ENCODE measurements at regions of chr2 and their contacts with region 1.

Region 1: GRCh38 chr2:60550178-60550983 is 3.1 kb downstream of the BCL11A start:
- DNase-seq: peak; percentile 89
- H3K4me3 ChIP-seq: peak overlapping the region; percentile 68 to 83 (median 76)
- H3K27ac ChIP-seq: peak overlapping the region; percentile 76 to 95 (median 87)
- H3K4me1 ChIP-seq: peaks cover 0 to 73% (median 48%) of the 10 kb centered on the region in 4 donors
- H3K27me3 ChIP-seq: peaks cover 0 to 34% (median 0%) of the 10 kb centered on the region in 3 donors
- CTCF ChIP-seq: peak in 3 of 4 experiments; percentile 59 to 70 (median 63)
- EP300 ChIP-seq: no peak
- POLR2A ChIP-seq: no peak

Region 2: GRCh38 chr2:59184276-59185020 is 1365.9 kb before region 1 on chr2:
- intact Hi-C with region 1: loop called (anchors 5 kb)
- DNase-seq: no peak
- H3K4me3 ChIP-seq: peak overlapping the region in 2 of 4 donors; percentile 6
- H3K27ac ChIP-seq: peak overlapping the region in 3 of 4 donors; percentile 68 to 72 (median 68)
- H3K4me1 ChIP-seq: peaks cover 0 to 22% (median 19%) of the 10 kb centered on the region in 4 donors
- H3K27me3 ChIP-seq: no peaks in the 10 kb centered on the region
- CTCF ChIP-seq: no peak
- EP300 ChIP-seq: no peak
- POLR2A ChIP-seq: no peak

Region 3: DNA sequence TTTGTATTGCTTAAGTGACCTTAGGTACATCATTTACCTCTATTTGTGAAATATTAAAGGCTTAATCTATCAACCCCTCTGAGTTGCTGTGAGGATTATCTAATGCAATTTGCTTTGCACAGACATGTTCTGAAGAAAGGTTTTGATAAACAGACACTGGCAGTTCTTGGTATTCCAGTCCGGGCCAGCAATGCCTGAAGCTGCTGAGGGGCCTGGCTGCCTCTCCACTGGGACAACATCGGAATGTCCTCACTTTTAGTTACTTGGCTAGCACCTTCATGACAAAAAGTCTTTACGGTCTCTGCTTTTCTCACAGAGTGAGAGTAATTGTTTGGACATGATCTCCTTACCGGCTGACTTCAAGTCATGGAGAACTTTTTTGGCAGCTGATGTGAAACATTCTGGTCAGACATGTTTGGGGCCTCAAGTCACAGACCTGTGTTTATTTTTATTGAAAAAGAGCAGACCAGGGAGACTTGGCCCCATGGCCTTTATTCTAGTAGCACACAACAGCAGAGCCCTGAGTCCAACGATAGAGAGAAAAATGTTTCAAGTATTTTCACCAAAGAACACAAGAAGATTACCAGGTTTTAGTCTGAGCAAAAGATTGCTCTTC is 1197.0 kb before region 1 on chr2:
- intact Hi-C with region 1: loop called (anchors 5 kb)
- DNase-seq: no peak
- H3K4me3 ChIP-seq: no peak overlapping the region
- H3K27ac ChIP-seq: peak overlapping the region in 3 of 4 donors; percentile 29 to 73 (median 73)
- H3K4me1 ChIP-seq: peaks cover 0 to 25% (median 20%) of the 10 kb centered on the region in 4 donors
- H3K27me3 ChIP-seq: no peaks in the 10 kb centered on the region
- CTCF ChIP-seq: no peak
- EP300 ChIP-seq: no peak
- POLR2A ChIP-seq: no peak

Region 4: DNA sequence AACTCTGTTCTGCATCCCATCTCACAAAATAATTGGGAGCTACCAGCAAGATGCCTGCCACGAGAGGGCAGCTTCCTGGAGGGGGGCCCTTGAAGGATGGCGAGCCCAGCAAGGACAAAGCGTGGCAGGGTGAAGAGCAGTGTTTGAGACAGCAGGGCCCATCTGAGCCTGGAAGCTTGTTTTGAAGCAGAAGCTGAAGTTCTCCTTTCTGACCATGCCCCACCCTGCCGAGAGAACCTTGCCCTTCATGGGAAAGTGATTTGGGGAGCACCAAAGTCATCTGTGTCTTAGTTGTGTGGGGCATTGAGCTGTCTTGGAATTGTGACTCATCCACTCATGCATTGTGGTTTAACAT is 213.3 kb before region 1 on chr2:
- intact Hi-C with region 1: loop called (anchors 10 kb)
- DNase-seq: no peak
- H3K4me3 ChIP-seq: no peak overlapping the region
- H3K27ac ChIP-seq: no peak overlapping the region
- H3K4me1 ChIP-seq: no peaks in the 10 kb centered on the region
- H3K27me3 ChIP-seq: no peaks in the 10 kb centered on the region
- CTCF ChIP-seq: no peak
- EP300 ChIP-seq: no peak
- POLR2A ChIP-seq: no peak